Activated B cell treated with CpG ODN at 0.5 μM for 24 hours (primary cell): ENCODE measurements at regions of chr6 and their contacts with region 1.

Region 1: GRCh38 chr6:35342258-35343091 is at the start of gene PPARD:
- DNase-seq: peak; percentile 99
- ATAC-seq: peak; percentile 98
- H3K4me3 Mint-ChIP-seq: peak within 1 kb of the TSS; percentile 87
- H3K27ac Mint-ChIP-seq: peak within 1 kb of the TSS; percentile 91
- H3K4me1 Mint-ChIP-seq: peaks cover 59% of the 10 kb centered on the region
- H3K27me3 Mint-ChIP-seq: no peaks in the 10 kb centered on the region
- CTCF ChIP-seq: peak; percentile 62
- total RNA-seq, gene PPARD: 20.2 and 21.4 TPM in 2 replicates

Region 2: DNA sequence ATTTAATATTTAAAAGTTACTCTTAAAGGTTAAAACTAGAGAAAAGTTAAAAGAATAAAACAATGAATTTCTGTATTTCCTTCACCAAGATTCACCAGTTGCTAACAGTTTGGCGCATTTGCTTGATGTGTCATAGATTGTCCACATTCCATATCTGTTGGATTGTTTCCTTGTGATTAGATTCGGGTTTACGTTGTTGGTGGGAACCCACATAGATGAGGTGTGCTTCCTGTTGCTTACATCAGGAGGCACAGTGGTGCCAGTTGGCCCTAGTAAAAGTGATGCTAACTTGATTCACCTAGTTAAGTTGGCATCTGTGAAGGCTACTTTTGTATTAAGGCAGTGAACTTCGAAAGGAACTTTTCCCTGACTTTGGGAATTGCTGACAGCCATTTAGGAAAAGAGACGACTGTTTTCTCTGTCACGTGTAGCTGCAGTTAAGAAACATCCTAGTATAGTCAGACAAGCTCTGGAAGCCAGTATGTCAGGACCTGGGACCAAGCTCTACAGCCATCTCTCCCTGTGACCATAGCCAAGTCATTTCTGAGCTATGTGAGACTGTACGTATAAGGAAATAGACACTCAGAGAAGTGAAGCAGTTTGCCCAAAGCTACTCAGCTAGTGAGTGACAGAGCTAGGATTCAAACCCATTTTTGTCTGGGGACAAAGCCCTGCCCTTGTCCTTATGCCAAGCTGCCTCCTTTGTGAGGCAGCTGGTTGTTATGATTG is 48.9 kb after region 1 on chr6:
- CTCF ChIA-PET with region 1: no interaction called
- POLR2A ChIA-PET with region 1: no interaction called
- intact Hi-C with region 1: loop called (anchors 2 kb)
- DNase-seq: no peak
- ATAC-seq: no peak
- H3K4me3 Mint-ChIP-seq: no peak overlapping the region
- H3K27ac Mint-ChIP-seq: no peak overlapping the region
- H3K4me1 Mint-ChIP-seq: peaks cover 43% of the 10 kb centered on the region
- H3K27me3 Mint-ChIP-seq: no peaks in the 10 kb centered on the region
- CTCF ChIP-seq: no peak

Region 3: GRCh38 chr6:35415065-35415991 is 72.9 kb after region 1 on chr6:
- CTCF ChIA-PET with region 1: interaction called, 6 read pairs
- POLR2A ChIA-PET with region 1: no interaction called
- intact Hi-C with region 1: loop called (anchors 1 kb)
- DNase-seq: no peak
- ATAC-seq: no peak
- H3K4me3 Mint-ChIP-seq: no peak overlapping the region
- H3K27ac Mint-ChIP-seq: no peak overlapping the region
- H3K4me1 Mint-ChIP-seq: peaks cover 26% of the 10 kb centered on the region
- H3K27me3 Mint-ChIP-seq: no peaks in the 10 kb centered on the region
- CTCF ChIP-seq: no peak

Region 4: GRCh38 chr6:35452186-35453090 is 110.0 kb after region 1 on chr6 and contains the start of gene FANCE:
- CTCF ChIA-PET with region 1: interaction called, 84 read pairs
- POLR2A ChIA-PET with region 1: interaction called, 29 read pairs
- intact Hi-C with region 1: loop called (anchors 1 kb)
- DNase-seq: peak; percentile 97
- ATAC-seq: peak; percentile 90
- H3K4me3 Mint-ChIP-seq: peak within 1 kb of the TSS; percentile 86
- H3K27ac Mint-ChIP-seq: peak within 1 kb of the TSS; percentile 5
- H3K4me1 Mint-ChIP-seq: peaks cover 27% of the 10 kb centered on the region
- H3K27me3 Mint-ChIP-seq: no peaks in the 10 kb centered on the region
- CTCF ChIP-seq: no peak
- total RNA-seq, gene FANCE: 8.5 and 9.2 TPM in 2 replicates